IMR-90 (cell line): ENCODE measurements at regions of chr19 and their contacts with region 1.

Region 1: GRCh38 chr19:43265664-43266025 is 3.7 kb downstream of the PSG9 start:
- DNase-seq: peak; percentile 11
- ATAC-seq: peak; percentile 79
- H3K4me3 ChIP-seq: no peak overlapping the region
- H3K27ac ChIP-seq: peak overlapping the region; percentile 87
- H3K4me1 ChIP-seq: peaks cover 18% of the 10 kb centered on the region
- H3K27me3 ChIP-seq: no peaks in the 10 kb centered on the region
- CTCF ChIP-seq: no peak
- POLR2A ChIP-seq: no peak
- RAD21 ChIP-seq: no peak

Region 2: DNA sequence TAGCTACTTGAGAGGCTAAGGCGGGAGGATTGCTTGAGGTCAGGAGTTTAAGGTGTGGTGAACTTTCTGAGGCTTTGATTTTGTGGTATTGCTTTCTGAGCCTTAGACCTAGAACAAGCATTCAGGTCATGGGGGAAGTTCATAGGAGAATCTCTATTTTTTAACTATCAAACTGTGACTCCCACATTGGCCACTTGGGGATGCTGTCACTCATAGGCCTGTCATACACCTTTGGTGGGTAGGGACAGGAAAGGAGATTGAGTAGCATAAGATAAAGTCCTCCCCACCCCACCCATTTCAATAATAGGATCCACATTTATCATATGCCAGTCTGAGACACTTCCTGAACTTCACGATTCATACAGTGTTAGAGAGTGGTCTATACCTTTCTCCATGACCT is 141.3 kb before region 1 on chr19:
- CTCF ChIA-PET with region 1: no interaction called
- POLR2A ChIA-PET with region 1: no interaction called
- dilution Hi-C with region 1: no loop called
- in situ Hi-C with region 1: loop called (anchors 10 kb)
- intact Hi-C with region 1: no loop called
- DNase-seq: no peak
- ATAC-seq: no peak
- H3K4me3 ChIP-seq: no peak overlapping the region
- H3K27ac ChIP-seq: peak overlapping the region; percentile 22; the same call in 1 of the 2 replicates
- H3K4me1 ChIP-seq: peaks cover 10% of the 10 kb centered on the region
- H3K27me3 ChIP-seq: no peaks in the 10 kb centered on the region
- CTCF ChIP-seq: peak; percentile 25; the same call in 1 of the 2 replicates
- POLR2A ChIP-seq: no peak
- RAD21 ChIP-seq: no peak

Region 3: GRCh38 chr19:43191191-43191590 is 74.5 kb before region 1 on chr19:
- CTCF ChIA-PET with region 1: no interaction called
- POLR2A ChIA-PET with region 1: interaction called, 3 read pairs
- dilution Hi-C with region 1: no loop called
- in situ Hi-C with region 1: loop called (anchors 5 kb)
- intact Hi-C with region 1: loop called (anchors 5 kb)
- DNase-seq: no peak
- ATAC-seq: no peak
- H3K4me3 ChIP-seq: no peak overlapping the region
- H3K27ac ChIP-seq: no peak overlapping the region
- H3K4me1 ChIP-seq: peaks cover 3% of the 10 kb centered on the region; the same call in 1 of the 2 replicates
- H3K27me3 ChIP-seq: no peaks in the 10 kb centered on the region
- CTCF ChIP-seq: no peak
- POLR2A ChIP-seq: no peak
- RAD21 ChIP-seq: no peak

Region 4: DNA sequence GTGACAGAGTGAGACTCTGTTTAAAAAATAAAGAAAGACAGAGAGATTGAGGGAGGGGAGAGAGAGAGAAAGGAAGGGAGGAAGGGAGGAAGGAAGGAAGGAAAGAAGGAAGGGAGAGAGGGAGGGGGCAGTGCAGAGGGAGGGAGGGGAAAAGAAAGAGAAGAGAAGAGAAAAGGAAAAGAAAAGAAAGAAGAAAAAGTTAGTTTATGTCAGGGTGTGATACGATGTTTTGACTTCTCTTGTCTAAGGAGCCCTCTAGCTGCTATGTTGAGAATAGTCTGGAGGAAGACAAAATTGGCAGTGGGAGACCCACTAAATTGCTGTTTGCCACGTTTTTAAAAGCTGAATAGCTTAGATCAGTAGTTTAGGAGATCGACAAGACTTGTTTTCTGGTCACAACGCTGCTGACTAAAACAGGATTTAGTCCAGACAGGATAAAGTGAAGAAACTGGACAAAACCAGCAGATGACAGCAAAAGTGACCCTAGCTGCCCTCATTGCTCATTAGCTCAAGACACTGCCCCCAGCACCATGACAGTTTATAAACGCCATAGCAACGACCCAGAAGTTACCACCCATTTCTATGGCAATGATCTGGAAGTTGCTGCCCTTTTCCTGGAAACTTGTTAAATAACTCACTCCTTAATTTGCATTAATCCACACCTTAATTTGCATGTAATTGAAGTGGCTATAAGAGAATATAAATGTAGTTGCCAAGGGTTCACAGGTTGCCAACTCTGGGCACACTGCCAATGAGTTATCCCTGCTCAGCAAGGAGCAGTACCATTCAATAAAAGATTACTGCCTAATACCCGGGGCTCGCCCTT is 160.1 kb after region 1 on chr19:
- CTCF ChIA-PET with region 1: no interaction called
- POLR2A ChIA-PET with region 1: no interaction called
- dilution Hi-C with region 1: no loop called
- in situ Hi-C with region 1: no loop called
- intact Hi-C with region 1: loop called (anchors 10 kb)
- DNase-seq: peak; percentile 18
- ATAC-seq: peak; percentile 79
- H3K4me3 ChIP-seq: no peak overlapping the region
- H3K27ac ChIP-seq: no peak overlapping the region
- H3K4me1 ChIP-seq: no peaks in the 10 kb centered on the region
- H3K27me3 ChIP-seq: peaks cover 5% of the 10 kb centered on the region
- CTCF ChIP-seq: peak; percentile 51
- POLR2A ChIP-seq: no peak
- RAD21 ChIP-seq: peak; percentile 42